HEK293 (cell line): ENCODE measurements at regions of chr2 and their contacts with region 1.

Region 1: DNA sequence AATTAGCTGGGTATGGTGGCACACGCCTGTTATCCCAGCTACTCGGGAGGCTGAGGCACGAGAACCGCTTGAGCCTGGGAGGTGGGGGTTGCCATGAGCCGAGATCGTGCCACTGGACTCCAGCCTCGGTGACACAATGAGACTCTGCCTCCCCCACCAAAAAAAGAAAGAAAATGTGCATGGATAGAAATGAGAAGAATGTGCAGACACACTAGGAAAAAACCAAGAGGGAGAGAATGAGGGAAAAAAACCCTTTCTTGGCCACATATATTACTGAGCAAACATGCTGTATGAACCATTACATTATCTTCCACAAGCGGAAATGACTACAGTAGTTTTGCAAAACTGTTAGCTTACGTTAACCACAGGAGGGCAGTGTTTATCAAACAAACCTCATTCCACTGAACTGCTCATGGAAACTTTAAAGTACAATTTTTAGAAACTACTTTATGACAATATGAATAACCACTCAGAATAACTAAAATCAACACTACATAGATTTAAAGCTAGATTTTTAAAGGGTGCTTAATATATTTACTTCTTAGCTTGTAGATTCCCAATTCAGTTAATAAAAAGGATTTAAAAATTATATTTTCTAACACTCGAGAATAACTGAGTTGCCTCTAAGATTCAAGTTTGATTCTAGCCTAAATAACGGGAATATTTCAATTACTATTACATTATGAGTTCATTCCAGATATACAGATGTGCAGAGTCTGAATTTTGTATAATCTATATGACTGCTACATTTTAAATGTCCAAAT is 26.4 kb downstream of the ASXL2 start:
- H3K4me3 ChIP-seq: no peak overlapping the region
- H3K27ac ChIP-seq: no peak overlapping the region
- H3K4me1 ChIP-seq: peaks cover 13% of the 10 kb centered on the region
- CTCF ChIP-seq: peak; percentile 62

Region 2: DNA sequence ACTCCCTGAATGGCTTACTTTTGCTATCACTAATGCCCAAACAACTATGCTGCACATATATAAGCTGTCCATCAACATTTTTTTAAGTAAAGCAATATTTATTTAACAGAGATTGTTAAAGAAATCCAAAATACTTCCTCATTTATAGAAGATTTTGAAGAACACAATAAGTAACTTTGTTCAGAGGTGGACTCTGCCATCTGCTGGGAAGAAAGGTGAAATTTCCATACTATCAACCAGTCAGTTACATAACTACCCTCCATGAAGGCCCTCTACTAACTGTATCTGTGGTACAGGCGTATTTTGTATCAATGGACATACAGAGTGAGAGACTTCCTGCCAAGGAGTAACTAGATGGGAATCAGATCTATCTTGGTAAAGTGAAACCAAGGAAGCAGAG is 284.5 kb before region 1 on chr2:
- CTCF ChIA-PET with region 1: no interaction called
- POLR2A ChIA-PET with region 1: no interaction called
- H3K4me3 ChIP-seq: no peak overlapping the region
- H3K27ac ChIP-seq: no peak overlapping the region
- H3K4me1 ChIP-seq: peaks cover 3% of the 10 kb centered on the region; the same call in 1 of the 2 replicates
- CTCF ChIP-seq: peak; percentile 45; the same call in 1 of the 2 replicates

Region 3: DNA sequence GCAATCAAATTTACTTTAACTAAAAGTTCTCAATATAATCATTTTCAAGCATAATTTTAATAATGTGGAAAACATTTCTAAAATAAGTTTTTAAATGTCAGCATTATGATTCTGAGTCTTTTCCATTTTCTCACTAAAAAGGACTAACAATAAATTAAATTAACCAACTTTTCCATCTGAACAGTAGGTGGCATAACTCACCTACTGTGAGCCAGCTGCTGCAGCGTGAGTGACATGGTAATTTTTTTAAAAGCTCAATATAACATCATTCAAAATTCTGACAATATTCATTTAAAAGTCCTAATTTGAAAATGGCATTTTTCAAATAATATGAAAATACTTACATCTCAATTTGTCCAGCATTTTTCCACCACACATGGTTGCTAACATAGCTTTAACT is 245.0 kb before region 1 on chr2:
- CTCF ChIA-PET with region 1: interaction called, 34 read pairs
- POLR2A ChIA-PET with region 1: no interaction called
- H3K4me3 ChIP-seq: no peak overlapping the region
- H3K27ac ChIP-seq: no peak overlapping the region
- H3K4me1 ChIP-seq: 0 out of 2 replicates have a peak, but pooled peaks cover 3% of the 10 kb centered on the region
- CTCF ChIP-seq: no peak; the same call in 1 of the 2 replicates

Region 4: GRCh38 chr2:25805987-25806386 is 45.9 kb before region 1 on chr2:
- CTCF ChIA-PET with region 1: no interaction called
- POLR2A ChIA-PET with region 1: no interaction called
- H3K4me3 ChIP-seq: no peak overlapping the region
- H3K27ac ChIP-seq: no peak overlapping the region
- H3K4me1 ChIP-seq: no peaks in the 10 kb centered on the region
- CTCF ChIP-seq: no peak

Region 5: GRCh38 chr2:25838152-25838756 is 13.7 kb before region 1 on chr2:
- CTCF ChIA-PET with region 1: interaction called, 33 read pairs
- POLR2A ChIA-PET with region 1: no interaction called
- H3K4me3 ChIP-seq: no peak overlapping the region
- H3K27ac ChIP-seq: no peak overlapping the region
- H3K4me1 ChIP-seq: no peaks in the 10 kb centered on the region
- CTCF ChIP-seq: no peak

Region 6: DNA sequence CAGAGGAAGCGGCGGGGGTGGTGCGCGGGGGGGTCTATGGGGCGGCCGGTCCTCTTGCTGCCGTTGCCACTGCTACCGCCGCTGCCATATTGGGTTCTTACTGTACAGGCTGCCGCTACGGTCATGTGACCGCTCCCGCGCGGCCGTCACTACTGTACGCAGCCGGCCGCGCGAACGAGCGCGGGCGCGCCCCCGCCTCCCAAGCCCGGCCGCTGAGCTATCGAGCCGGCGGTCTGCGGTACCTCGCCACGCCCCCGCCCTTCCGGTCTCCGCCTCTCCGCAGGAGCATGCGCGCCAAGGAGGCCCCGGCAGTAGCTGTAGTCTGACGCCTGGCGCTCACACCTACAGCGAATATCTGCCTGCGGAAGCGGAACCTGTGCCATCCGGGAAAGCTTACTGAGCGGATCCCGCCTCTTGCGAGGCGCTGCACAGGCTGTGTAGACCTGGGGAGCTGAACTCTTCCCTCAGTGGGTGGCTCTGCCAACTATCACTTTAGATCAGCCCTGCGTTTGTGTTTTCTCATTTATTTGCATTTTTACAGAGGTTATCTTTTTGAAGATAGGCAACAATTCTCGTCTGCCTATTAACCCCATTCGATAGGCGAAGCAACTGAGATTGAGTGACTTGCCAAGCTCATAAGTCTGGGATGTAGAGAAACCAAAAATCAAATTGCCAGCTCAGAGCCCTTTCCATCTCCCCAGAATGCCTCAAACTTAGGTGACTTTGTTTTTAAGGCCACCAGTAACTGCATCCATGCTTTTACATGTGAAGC is 26.6 kb after region 1 on chr2 and contains the start of gene ASXL2:
- CTCF ChIA-PET with region 1: interaction called, 11 read pairs
- POLR2A ChIA-PET with region 1: interaction called, 23 read pairs
- H3K4me3 ChIP-seq: peak within 1 kb of the TSS; percentile 95
- H3K27ac ChIP-seq: peak within 1 kb of the TSS; percentile 71
- H3K4me1 ChIP-seq: peaks cover 12% of the 10 kb centered on the region
- CTCF ChIP-seq: no peak; the same call in 1 of the 2 replicates

Region 7: GRCh38 chr2:26144953-26145680 is 293.2 kb after region 1 on chr2:
- CTCF ChIA-PET with region 1: interaction called, 30 read pairs
- POLR2A ChIA-PET with region 1: no interaction called
- H3K4me3 ChIP-seq: no peak overlapping the region
- H3K27ac ChIP-seq: no peak overlapping the region
- H3K4me1 ChIP-seq: 0 out of 2 replicates have a peak, but pooled peaks cover 5% of the 10 kb centered on the region
- CTCF ChIP-seq: no peak

Region 8: GRCh38 chr2:26666671-26667070 is 814.7 kb after region 1 on chr2:
- CTCF ChIA-PET with region 1: no interaction called
- POLR2A ChIA-PET with region 1: no interaction called
- H3K4me3 ChIP-seq: no peak overlapping the region
- H3K27ac ChIP-seq: no peak overlapping the region
- H3K4me1 ChIP-seq: no peaks in the 10 kb centered on the region
- CTCF ChIP-seq: no peak